ENCODE measurements at regions of chr11 and their contacts with region 1.

Region 1: DNA sequence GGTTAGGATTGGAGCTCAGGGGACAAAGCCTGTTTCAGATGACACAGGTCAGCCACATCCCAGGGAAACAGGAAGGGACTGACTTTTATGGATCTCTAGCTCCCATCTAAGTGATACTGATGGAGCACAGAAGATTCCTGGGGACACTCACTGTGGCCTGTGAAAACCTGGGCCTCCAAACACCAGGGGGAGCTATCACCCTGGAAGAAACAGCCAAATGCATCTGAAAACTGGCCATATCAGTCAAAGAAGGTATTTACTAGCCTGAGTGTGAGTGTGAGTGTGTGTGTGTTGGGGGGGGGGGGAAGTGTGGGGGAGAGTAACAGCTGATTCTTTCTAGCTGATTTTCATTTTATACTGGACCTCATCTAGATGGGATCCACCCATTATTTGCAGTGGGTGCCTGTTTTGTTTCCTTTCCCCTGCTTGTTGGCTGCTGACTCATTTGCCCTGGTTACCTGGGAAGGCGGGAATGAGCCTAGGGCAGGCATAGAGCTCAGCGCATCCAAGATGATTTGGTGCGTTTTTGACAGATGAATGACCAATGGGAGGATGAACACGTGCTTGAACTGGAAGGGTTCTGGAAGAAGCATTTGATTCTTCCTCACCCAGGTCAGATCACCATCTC is 284.0 kb downstream of the KIRREL3 start:
- DNase-seq: peak; percentile 68
- CTCF ChIP-seq: peak; percentile 66

Region 2: GRCh38 chr11:126647735-126648134 is 68.8 kb before region 1 on chr11:
- in situ Hi-C with region 1: no loop called
- DNase-seq: no peak
- CTCF ChIP-seq: no peak

Region 3: DNA sequence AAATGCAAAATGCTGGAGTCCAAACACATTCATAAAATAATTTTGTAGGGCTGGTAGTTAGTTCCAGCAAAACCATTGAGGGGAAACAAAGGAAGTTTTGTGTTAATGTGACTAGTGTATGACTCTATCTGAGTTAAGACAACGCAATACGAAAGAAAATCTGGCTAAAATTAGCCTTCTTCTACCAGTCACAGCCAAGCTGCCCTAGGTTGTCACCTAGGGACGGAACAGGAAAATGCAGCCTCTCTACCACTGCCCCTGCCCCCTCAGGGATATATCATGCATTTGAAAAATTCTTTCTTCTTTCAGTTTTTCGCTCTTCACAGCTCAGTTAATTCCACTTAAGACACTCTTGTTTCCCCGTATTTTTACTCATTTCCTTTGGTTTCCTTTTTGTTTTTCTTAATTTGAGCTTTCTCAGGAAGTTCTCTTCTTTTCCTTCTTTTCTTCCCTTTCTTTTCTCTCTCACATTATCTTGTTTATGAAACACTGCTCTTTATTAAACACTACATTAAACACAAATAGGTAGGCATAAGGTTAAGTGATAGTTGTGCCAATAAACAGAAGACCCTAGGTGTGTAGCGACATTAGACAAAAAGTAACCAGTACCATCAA is 253.4 kb after region 1 on chr11:
- in situ Hi-C with region 1: no loop called
- DNase-seq: no peak
- CTCF ChIP-seq: no peak

Region 4: GRCh38 chr11:126989942-126990715 is 273.6 kb after region 1 on chr11:
- in situ Hi-C with region 1: loop called (anchors 10 kb)
- DNase-seq: peak; percentile 79
- CTCF ChIP-seq: peak; percentile 96

Measured in GM13976 (cell line).